Activated T-helper 1 cell treated with anti-CD3 and anti-CD28 coated beads, Interleukin-12 subunit alpha, Interleukin-12 subunit beta, Interleukin-2, Interleukin-4 antibody, amounts not matched to agents 30 ng/mL and 10 ng/mL and 1 ng/mL, durations not matched to agents 14 hours and 24 hours and 36 hours (primary cell): ENCODE measurements at regions of chr3 and their contacts with region 1.

Region 1: DNA sequence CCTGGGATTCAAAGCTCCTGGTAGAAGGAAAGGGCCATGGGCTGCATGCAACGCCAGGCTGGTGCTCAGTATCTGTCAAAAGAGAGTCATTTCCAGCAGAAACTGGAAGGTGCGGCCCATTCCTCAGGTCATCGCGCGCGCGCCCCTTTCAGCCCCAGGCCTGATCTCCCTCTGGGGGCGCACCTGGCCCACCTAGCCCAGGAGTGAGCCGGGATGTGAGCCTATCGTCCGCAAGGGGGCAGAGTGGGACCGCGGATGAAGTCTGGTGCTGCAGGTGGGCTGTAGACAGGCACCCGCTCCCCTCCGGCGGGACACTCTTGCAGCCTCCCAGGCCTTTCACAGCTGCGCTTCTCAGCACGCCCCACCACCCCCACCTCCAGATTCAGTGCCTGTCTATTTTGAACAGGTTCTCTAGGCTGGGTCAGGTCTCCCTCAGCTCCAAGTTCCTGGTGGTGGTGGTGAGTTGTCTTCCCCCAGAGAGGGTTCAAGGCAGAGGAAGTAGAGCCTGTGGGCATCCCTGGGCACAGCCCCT is 5.8 kb upstream of the RPL29 start:
- DNase-seq: peak; percentile 77
- H3K4me3 Mint-ChIP-seq: no peak overlapping the region
- H3K27ac Mint-ChIP-seq: no peak overlapping the region
- H3K4me1 Mint-ChIP-seq: peaks cover 7% of the 10 kb centered on the region
- H3K27me3 Mint-ChIP-seq: peaks cover 9% of the 10 kb centered on the region

Region 2: DNA sequence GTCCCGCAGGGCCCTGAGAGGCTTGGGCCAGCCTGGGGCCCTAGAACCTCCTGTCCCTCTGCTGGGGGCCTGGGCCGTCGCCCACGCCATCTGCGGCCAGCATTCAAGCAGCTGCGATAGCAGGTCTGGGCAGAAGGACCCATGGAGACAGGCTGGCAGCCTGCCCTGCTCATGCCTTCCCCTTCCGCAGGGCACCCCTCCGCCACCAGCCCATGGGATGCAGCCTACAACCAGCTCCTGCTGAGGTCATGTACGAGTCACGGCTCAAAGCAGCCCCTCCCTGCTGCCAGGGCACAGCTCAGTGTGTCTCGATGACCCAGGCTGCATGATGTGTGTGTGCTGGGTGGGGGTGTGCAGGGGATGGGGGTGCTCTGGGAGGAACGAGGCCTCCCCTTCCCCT is 27.1 kb after region 1 on chr3:
- intact Hi-C with region 1: no loop called
- DNase-seq: no peak
- H3K4me3 Mint-ChIP-seq: no peak overlapping the region
- H3K27ac Mint-ChIP-seq: no peak overlapping the region
- H3K4me1 Mint-ChIP-seq: no peaks in the 10 kb centered on the region
- H3K27me3 Mint-ChIP-seq: peaks cover 5% of the 10 kb centered on the region

Region 3: DNA sequence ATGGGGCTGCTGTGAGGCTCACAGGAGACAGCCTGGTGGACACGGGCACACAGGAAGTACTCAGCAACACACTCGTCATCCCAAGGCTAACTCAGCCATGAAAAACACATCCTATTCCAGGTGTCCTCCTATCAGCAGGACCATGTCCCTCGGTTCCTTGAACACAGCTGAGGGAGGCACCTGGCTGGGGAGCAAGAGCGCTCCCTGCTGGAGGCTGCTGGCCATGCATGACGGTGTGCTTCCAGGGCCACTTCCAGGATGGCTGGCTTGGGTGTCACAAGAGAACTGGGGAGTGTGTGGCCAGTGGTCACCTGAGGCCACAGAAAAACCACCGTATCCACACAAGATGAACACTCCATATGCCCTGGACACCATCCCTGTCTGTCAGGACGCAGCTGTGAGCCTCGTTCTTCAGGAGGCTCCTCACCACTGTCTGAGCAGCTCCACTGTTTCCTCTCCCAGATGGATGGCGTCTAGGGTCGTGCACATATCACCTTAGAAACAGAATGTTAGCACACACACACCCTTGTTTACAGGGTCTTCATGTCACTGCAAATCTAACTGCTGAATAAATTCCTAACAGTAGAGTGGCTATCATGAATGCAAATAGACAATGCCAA is 121.7 kb after region 1 on chr3:
- intact Hi-C with region 1: loop called (anchors 1 kb)
- DNase-seq: peak; percentile 65
- H3K4me3 Mint-ChIP-seq: no peak overlapping the region
- H3K27ac Mint-ChIP-seq: no peak overlapping the region
- H3K4me1 Mint-ChIP-seq: peaks cover 34% of the 10 kb centered on the region
- H3K27me3 Mint-ChIP-seq: no peaks in the 10 kb centered on the region

Region 4: GRCh38 chr3:52144034-52144795 is 142.7 kb after region 1 on chr3:
- intact Hi-C with region 1: loop called (anchors 1 kb)
- DNase-seq: peak; percentile 71
- H3K4me3 Mint-ChIP-seq: no peak overlapping the region
- H3K27ac Mint-ChIP-seq: peak overlapping the region; percentile 18
- H3K4me1 Mint-ChIP-seq: peaks cover 14% of the 10 kb centered on the region
- H3K27me3 Mint-ChIP-seq: no peaks in the 10 kb centered on the region

Region 5: GRCh38 chr3:52339612-52340011 is 338.1 kb after region 1 on chr3:
- intact Hi-C with region 1: loop called (anchors 2 kb)
- DNase-seq: peak; percentile 40
- H3K4me3 Mint-ChIP-seq: no peak overlapping the region
- H3K27ac Mint-ChIP-seq: no peak overlapping the region
- H3K4me1 Mint-ChIP-seq: no peaks in the 10 kb centered on the region
- H3K27me3 Mint-ChIP-seq: no peaks in the 10 kb centered on the region